GM10248 (cell line): ENCODE measurements at regions of chr11 and their contacts with region 1.

Region 1: GRCh38 chr11:72030472-72031045 is 31.9 kb downstream of the IL18BP start:
- DNase-seq: no peak
- CTCF ChIP-seq: no peak

Region 2: GRCh38 chr11:72040726-72041441 is 10.3 kb after region 1 on chr11:
- CTCF ChIA-PET with region 1: interaction called, 159 read pairs
- POLR2A ChIA-PET with region 1: interaction called, 3 read pairs
- DNase-seq: peak; percentile 65
- CTCF ChIP-seq: no peak

Region 3: DNA sequence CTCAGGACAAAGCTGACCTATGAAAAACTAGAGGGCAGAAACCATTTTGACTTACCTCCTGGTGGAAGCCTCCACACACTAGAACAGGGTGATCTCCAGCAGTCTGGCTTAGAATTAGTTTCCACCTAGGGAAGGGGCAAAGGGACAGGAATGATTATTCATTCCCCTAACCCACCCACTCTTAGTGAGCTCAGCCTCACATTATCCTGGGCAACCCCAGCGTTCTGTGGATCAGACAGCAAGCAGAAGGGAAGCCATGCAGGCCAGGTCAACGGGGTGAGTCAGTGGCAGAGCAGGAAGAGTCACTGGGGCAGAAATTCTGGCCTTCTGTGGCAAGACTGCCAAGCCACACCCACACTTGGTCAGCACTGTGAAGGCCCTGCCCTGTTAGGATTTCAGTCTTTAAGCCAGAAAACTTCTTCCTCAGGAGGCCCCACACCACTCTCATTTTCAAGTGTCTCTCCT is 39.3 kb after region 1 on chr11:
- CTCF ChIA-PET with region 1: interaction called, 21 read pairs
- POLR2A ChIA-PET with region 1: no interaction called
- DNase-seq: peak; percentile 26
- CTCF ChIP-seq: no peak

Region 4: GRCh38 chr11:72091005-72091691 is 60.6 kb after region 1 on chr11:
- CTCF ChIA-PET with region 1: interaction called, 208 read pairs
- POLR2A ChIA-PET with region 1: interaction called, 4 read pairs
- DNase-seq: peak; percentile 78
- CTCF ChIP-seq: peak; percentile 79

Region 5: DNA sequence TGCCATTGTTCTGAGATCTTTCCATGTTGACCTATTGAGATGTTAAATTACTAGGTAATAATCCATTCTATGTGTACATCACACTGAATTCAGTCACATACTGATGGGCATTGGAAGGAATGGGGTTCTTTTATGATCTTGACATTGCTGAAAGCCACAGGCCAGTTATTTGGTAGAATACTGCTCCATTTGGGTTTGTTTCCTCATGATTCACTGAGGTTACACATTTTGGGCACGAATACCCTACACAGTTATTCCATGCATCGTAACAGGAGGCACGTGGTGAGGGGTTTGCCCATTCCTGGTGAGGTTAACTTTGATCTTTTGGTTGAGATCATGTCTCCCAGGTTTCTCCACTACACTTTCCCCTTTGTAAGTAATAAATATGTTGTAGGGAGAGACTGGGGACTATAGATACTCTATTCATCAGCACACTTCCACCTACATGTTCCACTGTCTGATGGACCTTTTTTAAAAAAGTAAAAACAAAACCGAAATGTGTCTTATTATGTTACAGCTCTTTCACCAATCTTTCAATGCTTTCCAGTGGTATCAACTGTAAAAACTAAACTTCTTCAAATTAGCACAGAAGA is 149.3 kb after region 1 on chr11:
- CTCF ChIA-PET with region 1: interaction called, 11 read pairs
- POLR2A ChIA-PET with region 1: no interaction called
- DNase-seq: no peak
- CTCF ChIP-seq: no peak